ENCODE measurements at regions of chr14 and their contacts with region 1.

Region 1: GRCh38 chr14:91418387-91419043 is 895 bp upstream of the CCDC88C start:
- DNase-seq: peak; percentile 88
- ATAC-seq: peak; percentile 20
- H3K4me3 Mint-ChIP-seq: peak overlapping the region; percentile 65
- H3K27ac Mint-ChIP-seq: peak overlapping the region; percentile 82
- H3K4me1 Mint-ChIP-seq: peaks cover 32% of the 10 kb centered on the region
- H3K27me3 Mint-ChIP-seq: no peaks in the 10 kb centered on the region

Region 2: DNA sequence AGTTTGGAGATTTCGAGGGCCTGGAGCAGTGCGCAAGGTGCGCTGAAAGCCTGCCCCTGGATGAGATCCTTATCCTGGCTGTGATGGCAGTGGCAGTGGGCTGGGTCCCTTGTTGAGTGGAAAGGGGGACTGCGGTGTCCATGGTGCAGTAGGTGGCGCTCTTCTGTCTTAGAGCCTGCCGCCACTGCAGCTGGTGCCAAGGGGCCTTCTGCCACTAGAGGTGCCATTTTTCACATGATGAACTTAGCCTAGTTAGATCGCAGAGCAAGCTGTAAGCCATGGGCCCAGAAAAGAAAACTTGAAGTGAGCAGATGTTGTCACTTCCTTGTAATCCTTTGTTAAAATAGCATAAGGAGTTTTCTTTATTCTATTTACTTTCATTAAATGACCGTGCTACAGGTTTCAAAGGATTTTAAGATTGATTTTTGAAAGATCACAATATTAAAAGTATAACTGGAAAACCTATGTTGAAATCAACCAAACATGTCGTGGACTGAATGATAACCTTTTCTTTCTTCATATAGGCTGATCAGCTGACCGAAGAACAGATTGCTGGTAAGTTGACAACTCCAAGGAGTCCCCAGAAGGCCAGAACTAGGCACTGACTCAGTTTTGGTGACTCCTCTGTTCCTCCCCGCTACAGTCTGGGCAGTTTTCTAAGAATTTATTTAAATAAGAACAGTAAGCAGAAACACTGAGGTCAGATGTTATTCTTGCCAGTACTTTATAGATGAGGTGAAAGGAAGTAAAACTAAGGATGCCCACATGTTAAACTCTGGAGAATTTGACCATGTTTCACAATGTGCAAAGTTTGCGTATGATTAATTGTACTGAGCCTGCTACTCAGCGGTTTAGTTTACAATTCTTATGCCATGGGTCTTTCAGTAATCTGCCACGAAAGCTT is 1018.7 kb before region 1 on chr14:
- CTCF ChIA-PET with region 1: no interaction called
- POLR2A ChIA-PET with region 1: no interaction called
- intact Hi-C with region 1: loop called in 1 of 2 experiments (anchors 5 kb)
- DNase-seq: peak; percentile 93
- ATAC-seq: peak; percentile 62
- H3K4me3 Mint-ChIP-seq: peak overlapping the region; percentile 97
- H3K27ac Mint-ChIP-seq: peak overlapping the region; percentile 95
- H3K4me1 Mint-ChIP-seq: peaks cover 53% of the 10 kb centered on the region
- H3K27me3 Mint-ChIP-seq: no peaks in the 10 kb centered on the region

Region 3: GRCh38 chr14:91177073-91178034 is 241.2 kb before region 1 on chr14:
- CTCF ChIA-PET with region 1: no interaction called
- POLR2A ChIA-PET with region 1: no interaction called
- intact Hi-C with region 1: loop called in 1 of 2 experiments (anchors 2 kb)
- DNase-seq: peak; percentile 79
- ATAC-seq: peak; percentile 81
- H3K4me3 Mint-ChIP-seq: no peak overlapping the region
- H3K27ac Mint-ChIP-seq: peak overlapping the region; percentile 92
- H3K4me1 Mint-ChIP-seq: peaks cover 11% of the 10 kb centered on the region
- H3K27me3 Mint-ChIP-seq: no peaks in the 10 kb centered on the region

Region 4: GRCh38 chr14:91249841-91250616 is 168.5 kb before region 1 on chr14:
- CTCF ChIA-PET with region 1: no interaction called
- POLR2A ChIA-PET with region 1: interaction called, 5 read pairs
- intact Hi-C with region 1: loop called in 1 of 2 experiments (anchors 5 kb)
- DNase-seq: peak; percentile 55
- ATAC-seq: no peak
- H3K4me3 Mint-ChIP-seq: peak overlapping the region; percentile 21
- H3K27ac Mint-ChIP-seq: peak overlapping the region; percentile 84
- H3K4me1 Mint-ChIP-seq: peaks cover 87% of the 10 kb centered on the region
- H3K27me3 Mint-ChIP-seq: no peaks in the 10 kb centered on the region

Region 5: GRCh38 chr14:91292491-91292890 is 126.0 kb before region 1 on chr14:
- CTCF ChIA-PET with region 1: no interaction called
- POLR2A ChIA-PET with region 1: no interaction called
- intact Hi-C with region 1: no loop called
- DNase-seq: no peak
- ATAC-seq: no peak
- H3K4me3 Mint-ChIP-seq: no peak overlapping the region
- H3K27ac Mint-ChIP-seq: peak overlapping the region; percentile 26
- H3K4me1 Mint-ChIP-seq: no peaks in the 10 kb centered on the region
- H3K27me3 Mint-ChIP-seq: no peaks in the 10 kb centered on the region

Region 6: DNA sequence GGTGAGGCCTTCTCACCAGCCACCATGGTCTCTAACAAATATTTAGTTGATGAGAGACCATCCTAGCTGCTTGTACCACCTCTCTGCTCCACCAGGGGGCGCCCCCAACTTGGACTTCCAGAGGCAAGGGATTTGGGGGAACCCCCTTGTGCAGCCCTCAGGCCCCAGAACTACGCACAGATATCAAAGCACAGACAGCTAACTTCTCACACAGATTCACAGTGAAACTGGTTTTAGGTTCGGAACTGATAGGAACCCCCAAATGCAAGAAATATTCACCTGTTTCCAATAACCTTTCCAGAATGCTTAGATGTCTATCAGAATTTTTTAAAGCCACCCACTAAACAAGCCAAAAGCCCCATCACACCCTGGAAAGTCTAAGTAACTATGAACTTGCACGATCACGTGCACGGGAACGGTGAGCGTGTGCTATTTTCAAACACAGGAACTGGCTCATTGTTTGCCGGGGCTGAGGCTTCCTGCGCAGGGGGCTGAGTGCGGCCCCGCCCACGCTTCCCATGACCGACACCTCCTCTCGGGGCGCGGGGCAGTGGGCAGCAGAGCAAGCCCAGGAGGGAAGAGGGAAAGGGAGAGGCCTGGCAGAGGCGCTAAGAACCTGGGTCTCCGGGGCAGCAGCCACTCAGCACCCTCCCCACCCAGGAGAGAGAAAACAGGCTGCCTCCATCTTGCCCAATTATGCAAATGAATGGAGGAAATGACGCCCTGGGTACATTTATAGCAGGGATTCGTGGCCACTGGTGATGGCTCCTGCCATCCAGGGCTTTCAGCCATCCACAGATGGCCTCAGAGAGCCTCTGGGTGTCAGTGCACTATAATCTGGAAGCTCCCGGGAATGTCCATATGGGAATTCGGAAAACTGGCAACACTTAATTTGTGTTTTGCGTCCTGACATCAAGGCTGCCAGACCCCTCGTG is 94.6 kb before region 1 on chr14:
- CTCF ChIA-PET with region 1: interaction called, 177 read pairs
- POLR2A ChIA-PET with region 1: interaction called, 17 read pairs
- intact Hi-C with region 1: loop called (anchors 1 kb)
- DNase-seq: peak; percentile 98
- ATAC-seq: peak; percentile 85
- H3K4me3 Mint-ChIP-seq: peak overlapping the region; percentile 74
- H3K27ac Mint-ChIP-seq: peak overlapping the region; percentile 100
- H3K4me1 Mint-ChIP-seq: peaks cover 83% of the 10 kb centered on the region
- H3K27me3 Mint-ChIP-seq: no peaks in the 10 kb centered on the region

Region 7: GRCh38 chr14:91396959-91397815 is 21.3 kb before region 1 on chr14:
- CTCF ChIA-PET with region 1: interaction called, 10 read pairs
- POLR2A ChIA-PET with region 1: interaction called, 8 read pairs
- intact Hi-C with region 1: no loop called
- DNase-seq: peak; percentile 83
- ATAC-seq: peak; percentile 85
- H3K4me3 Mint-ChIP-seq: peak overlapping the region; percentile 71
- H3K27ac Mint-ChIP-seq: peak overlapping the region; percentile 94
- H3K4me1 Mint-ChIP-seq: peaks cover 94% of the 10 kb centered on the region
- H3K27me3 Mint-ChIP-seq: no peaks in the 10 kb centered on the region

Measured in activated CD4-positive, alpha-beta T cell treated with anti-CD3 and anti-CD28 coated beads for 36 hours (primary cell).